Activated CD4-positive, alpha-beta memory T cell treated with anti-CD3 and anti-CD28 coated beads, Interleukin-2, amount 10 ng/mL, durations not matched to agents 7 days and 5 days (primary cell): ENCODE measurements at regions of chr12 and their contacts with region 1.

Region 1: GRCh38 chr12:106282457-106283097 is 20.0 kb upstream of the TCP11L2 start:
- DNase-seq: peak; percentile 56
- H3K4me3 Mint-ChIP-seq: no peak overlapping the region
- H3K27ac Mint-ChIP-seq: no peak overlapping the region
- H3K4me1 Mint-ChIP-seq: peaks cover 13% of the 10 kb centered on the region
- H3K27me3 Mint-ChIP-seq: peaks cover 6% of the 10 kb centered on the region

Region 2: GRCh38 chr12:106296193-106296877 is 13.8 kb after region 1 on chr12:
- CTCF ChIA-PET with region 1: interaction called, 31 read pairs
- POLR2A ChIA-PET with region 1: interaction called, 7 read pairs
- DNase-seq: no peak
- H3K4me3 Mint-ChIP-seq: no peak overlapping the region
- H3K27ac Mint-ChIP-seq: no peak overlapping the region
- H3K4me1 Mint-ChIP-seq: peaks cover 12% of the 10 kb centered on the region
- H3K27me3 Mint-ChIP-seq: no peaks in the 10 kb centered on the region